ENCODE measurements at regions of chr2 and their contacts with region 1.

Region 1: GRCh38 chr2:219253753-219254590 is at the start of gene TUBA4A:
- DNase-seq: peak; percentile 86 to 96 (median 91)
- ATAC-seq: peak; percentile 75 to 77
- H3K4me3 Mint-ChIP-seq: peak within 1 kb of the TSS; percentile 78 to 100 (median 94)
- H3K27ac Mint-ChIP-seq: peak within 1 kb of the TSS; percentile 77 to 99 (median 98)
- H3K4me1 Mint-ChIP-seq: peaks cover 22 to 55% (median 48%) of the 10 kb centered on the region in 4 donors
- H3K27me3 Mint-ChIP-seq: no peaks in the 10 kb centered on the region
- polyA plus RNA-seq, gene TUBA4A: 107 to 275 (median 122) TPM

Region 2: GRCh38 chr2:219142329-219142728 is 111.6 kb before region 1 on chr2:
- POLR2A ChIA-PET with region 1: no interaction called
- DNase-seq: no peak
- ATAC-seq: no peak
- H3K4me3 Mint-ChIP-seq: no peak overlapping the region
- H3K27ac Mint-ChIP-seq: peak overlapping the region in 1 of 10 donors; percentile 69
- H3K4me1 Mint-ChIP-seq: peaks cover 0 to 9% (median 2%) of the 10 kb centered on the region in 4 donors
- H3K27me3 Mint-ChIP-seq: no peaks in the 10 kb centered on the region

Region 3: GRCh38 chr2:219199470-219200211 is 54.3 kb before region 1 on chr2:
- POLR2A ChIA-PET with region 1: interaction called, 14 read pairs
- DNase-seq: no peak
- ATAC-seq: no peak
- H3K4me3 Mint-ChIP-seq: peak overlapping the region; percentile 61 to 94 (median 86)
- H3K27ac Mint-ChIP-seq: peak overlapping the region; percentile 57 to 97 (median 80)
- H3K4me1 Mint-ChIP-seq: peaks cover 12 to 30% (median 26%) of the 10 kb centered on the region in 4 donors
- H3K27me3 Mint-ChIP-seq: peaks cover 0 to 7% (median 0%) of the 10 kb centered on the region in 5 donors

Region 4: GRCh38 chr2:219266232-219266631 is 12.3 kb after region 1 on chr2:
- POLR2A ChIA-PET with region 1: interaction called, 10 read pairs
- DNase-seq: no peak
- ATAC-seq: no peak
- H3K4me3 Mint-ChIP-seq: no peak overlapping the region
- H3K27ac Mint-ChIP-seq: peak overlapping the region in 1 of 10 donors; percentile 57
- H3K4me1 Mint-ChIP-seq: peaks cover 6 to 8% (median 7%) of the 10 kb centered on the region in 4 donors
- H3K27me3 Mint-ChIP-seq: no peaks in the 10 kb centered on the region

Region 5: DNA sequence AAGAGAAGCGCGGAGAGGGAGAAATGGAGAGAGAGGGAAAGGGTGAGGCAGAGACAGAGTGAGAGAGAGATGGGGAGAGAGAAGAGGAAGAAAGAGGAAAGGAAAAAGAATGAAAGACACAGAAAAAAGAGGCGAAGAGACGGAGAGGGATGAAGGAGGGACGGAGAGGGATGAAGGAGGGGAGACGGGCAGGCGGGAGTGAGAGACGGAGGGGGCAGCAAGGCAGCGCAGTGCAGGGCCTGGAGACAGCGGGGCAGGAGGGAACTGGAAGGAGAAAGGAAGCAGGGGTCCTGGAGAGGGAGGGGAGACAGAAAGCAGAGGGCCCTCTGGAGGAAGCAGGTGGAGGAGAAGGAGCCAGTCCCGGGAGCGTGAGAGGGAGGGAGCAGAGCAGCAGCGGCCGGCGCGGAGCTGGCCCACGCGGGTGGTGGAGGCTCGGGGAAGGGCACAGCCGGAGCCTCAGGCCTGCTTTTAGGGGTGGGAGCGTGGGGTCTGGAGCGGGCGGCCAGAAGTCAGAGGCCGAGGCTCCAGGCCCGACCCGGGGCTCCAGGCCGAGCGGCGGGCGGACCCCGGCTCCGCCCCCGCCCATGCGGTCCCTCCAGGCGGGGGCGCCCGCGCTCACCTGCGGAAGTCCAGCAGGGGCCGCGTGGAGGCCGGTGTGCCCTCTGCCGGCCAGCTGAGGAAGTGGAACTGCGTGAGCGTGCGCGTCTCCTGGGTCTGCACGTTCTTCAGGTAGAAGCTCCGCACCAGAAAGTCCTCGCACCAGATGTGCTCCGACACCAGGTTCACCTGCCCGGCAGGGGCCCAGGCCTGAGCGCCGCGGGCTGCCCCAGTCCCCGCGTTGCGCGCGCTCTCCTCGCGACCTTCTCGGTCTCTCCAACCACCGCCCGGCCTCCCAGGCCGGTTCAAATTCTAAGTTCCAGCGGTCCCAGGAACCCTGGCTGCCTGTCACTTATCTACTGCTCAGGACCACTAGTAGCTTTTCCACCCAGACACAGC is 40.7 kb after region 1 on chr2:
- POLR2A ChIA-PET with region 1: interaction called, 23 read pairs
- DNase-seq: peak; percentile 79 to 92 (median 90)
- ATAC-seq: peak; percentile 89 to 92
- H3K4me3 Mint-ChIP-seq: peak overlapping the region; percentile 62 to 82 (median 76)
- H3K27ac Mint-ChIP-seq: peak overlapping the region in 9 of 10 donors; percentile 32 to 93 (median 81)
- H3K4me1 Mint-ChIP-seq: peaks cover 13 to 44% (median 37%) of the 10 kb centered on the region in 4 donors
- H3K27me3 Mint-ChIP-seq: peaks cover 0 to 3% (median 0%) of the 10 kb centered on the region in 5 donors